CD8-positive, alpha-beta T cell (primary cell): ENCODE measurements at regions of chr5 and their contacts with region 1.

Region 1: GRCh38 chr5:16489322-16489791 is 23.8 kb upstream of the ZNF622 start:
- DNase-seq: peak in 3 of 9 experiments; percentile 11 to 38 (median 25)
- ATAC-seq: peak; percentile 84
- H3K4me3 ChIP-seq: no peak overlapping the region
- H3K4me3 Mint-ChIP-seq: no peak overlapping the region
- H3K27ac ChIP-seq: no peak overlapping the region
- H3K27ac Mint-ChIP-seq: no peak overlapping the region
- H3K4me1 ChIP-seq: no peaks in the 10 kb centered on the region
- H3K4me1 Mint-ChIP-seq: peaks cover 52% of the 10 kb centered on the region
- H3K27me3 ChIP-seq: no peaks in the 10 kb centered on the region
- H3K27me3 Mint-ChIP-seq: no peaks in the 10 kb centered on the region
- CTCF ChIP-seq: peak; percentile 67

Region 2: DNA sequence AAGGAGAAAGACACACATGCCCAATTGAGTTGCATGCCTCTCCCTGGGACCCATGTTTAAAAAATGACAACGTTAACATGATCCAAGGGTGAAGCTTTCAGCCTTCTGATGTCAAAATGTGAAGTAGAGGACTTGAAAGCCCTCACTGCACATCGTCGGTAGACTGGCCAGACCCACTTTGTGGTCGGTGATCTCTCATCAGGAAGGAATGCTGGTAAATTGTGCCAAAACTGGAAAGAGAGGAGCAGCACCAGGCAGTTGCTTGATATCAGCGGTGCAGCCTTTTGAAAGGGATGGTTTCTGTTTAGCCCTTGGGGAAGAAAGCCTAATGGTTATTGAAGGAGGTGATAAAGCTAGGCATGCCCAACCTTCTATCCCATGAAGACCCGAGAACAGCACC is 184.5 kb before region 1 on chr5:
- CTCF ChIA-PET with region 1: no interaction called
- POLR2A ChIA-PET with region 1: no interaction called
- intact Hi-C with region 1: no loop called
- DNase-seq: no peak
- ATAC-seq: no peak
- H3K4me3 ChIP-seq: no peak overlapping the region
- H3K4me3 Mint-ChIP-seq: no peak overlapping the region
- H3K27ac ChIP-seq: no peak overlapping the region
- H3K27ac Mint-ChIP-seq: no peak overlapping the region
- H3K4me1 ChIP-seq: no peaks in the 10 kb centered on the region
- H3K4me1 Mint-ChIP-seq: no peaks in the 10 kb centered on the region
- H3K27me3 ChIP-seq: no peaks in the 10 kb centered on the region
- H3K27me3 Mint-ChIP-seq: peaks cover 3% of the 10 kb centered on the region
- CTCF ChIP-seq: no peak

Region 3: DNA sequence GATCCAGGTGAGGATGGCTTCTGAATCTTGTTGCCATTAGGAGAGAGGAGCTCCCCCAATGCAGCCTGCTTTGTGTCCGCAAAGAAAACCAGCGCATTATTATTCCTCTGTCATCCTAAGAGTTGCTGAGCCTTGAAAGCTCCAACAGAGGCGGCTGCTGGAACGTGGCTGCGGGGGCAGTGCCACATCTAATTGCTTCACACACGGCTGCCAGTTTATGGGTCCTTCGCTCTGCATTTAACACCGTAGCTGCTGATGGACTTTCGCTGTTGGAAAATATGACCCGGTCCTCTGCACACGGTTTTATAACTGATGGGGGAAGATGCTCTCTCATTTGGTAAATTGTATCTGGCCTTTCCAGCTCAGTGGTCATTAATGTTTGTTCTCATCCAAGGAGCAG is 61.8 kb before region 1 on chr5:
- CTCF ChIA-PET with region 1: no interaction called
- POLR2A ChIA-PET with region 1: no interaction called
- intact Hi-C with region 1: no loop called
- DNase-seq: no peak
- ATAC-seq: no peak
- H3K4me3 ChIP-seq: no peak overlapping the region
- H3K4me3 Mint-ChIP-seq: no peak overlapping the region
- H3K27ac ChIP-seq: no peak overlapping the region
- H3K27ac Mint-ChIP-seq: no peak overlapping the region
- H3K4me1 ChIP-seq: no peaks in the 10 kb centered on the region
- H3K4me1 Mint-ChIP-seq: no peaks in the 10 kb centered on the region
- H3K27me3 ChIP-seq: no peaks in the 10 kb centered on the region
- H3K27me3 Mint-ChIP-seq: peaks cover 17% of the 10 kb centered on the region
- CTCF ChIP-seq: no peak

Region 4: DNA sequence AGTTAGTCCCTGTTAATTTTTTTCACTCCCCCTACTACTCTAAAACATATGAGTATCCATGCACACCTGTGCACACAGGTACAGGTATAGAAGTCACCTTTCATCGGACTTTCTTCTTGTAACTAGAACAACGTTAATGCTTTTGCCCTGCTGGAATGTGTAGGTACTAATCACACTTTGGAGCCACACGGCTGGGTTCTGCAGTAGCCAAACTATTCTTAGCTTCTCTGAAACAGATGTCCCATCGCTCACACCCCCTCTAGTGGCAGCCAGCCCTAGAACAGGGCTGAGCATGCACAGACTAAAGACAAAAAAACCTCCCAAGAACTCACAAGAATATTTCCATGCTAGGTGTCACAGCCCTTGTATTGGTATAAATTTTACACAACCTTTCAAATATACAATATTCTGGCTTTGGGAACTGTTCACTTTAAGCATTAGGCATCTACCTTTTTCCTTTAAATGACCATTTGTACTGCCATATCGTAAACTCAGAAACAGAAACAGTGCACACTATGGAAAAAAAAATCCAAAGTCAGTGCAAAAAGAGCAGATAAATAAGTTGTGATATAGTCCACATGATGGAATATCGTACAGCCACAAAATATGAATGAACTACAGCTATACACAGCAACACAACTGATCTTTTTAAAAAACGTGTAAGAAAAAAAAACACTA is 63.4 kb after region 1 on chr5:
- CTCF ChIA-PET with region 1: interaction called, 4 read pairs
- POLR2A ChIA-PET with region 1: no interaction called
- intact Hi-C with region 1: loop called (anchors 5 kb)
- DNase-seq: peak in 8 of 9 experiments; percentile 11 to 63 (median 49)
- ATAC-seq: peak; percentile 86
- H3K4me3 ChIP-seq: no peak overlapping the region
- H3K4me3 Mint-ChIP-seq: no peak overlapping the region
- H3K27ac ChIP-seq: no peak overlapping the region
- H3K27ac Mint-ChIP-seq: no peak overlapping the region
- H3K4me1 ChIP-seq: no peaks in the 10 kb centered on the region
- H3K4me1 Mint-ChIP-seq: peaks cover 54% of the 10 kb centered on the region
- H3K27me3 ChIP-seq: no peaks in the 10 kb centered on the region
- H3K27me3 Mint-ChIP-seq: no peaks in the 10 kb centered on the region
- CTCF ChIP-seq: peak; percentile 73

Region 5: DNA sequence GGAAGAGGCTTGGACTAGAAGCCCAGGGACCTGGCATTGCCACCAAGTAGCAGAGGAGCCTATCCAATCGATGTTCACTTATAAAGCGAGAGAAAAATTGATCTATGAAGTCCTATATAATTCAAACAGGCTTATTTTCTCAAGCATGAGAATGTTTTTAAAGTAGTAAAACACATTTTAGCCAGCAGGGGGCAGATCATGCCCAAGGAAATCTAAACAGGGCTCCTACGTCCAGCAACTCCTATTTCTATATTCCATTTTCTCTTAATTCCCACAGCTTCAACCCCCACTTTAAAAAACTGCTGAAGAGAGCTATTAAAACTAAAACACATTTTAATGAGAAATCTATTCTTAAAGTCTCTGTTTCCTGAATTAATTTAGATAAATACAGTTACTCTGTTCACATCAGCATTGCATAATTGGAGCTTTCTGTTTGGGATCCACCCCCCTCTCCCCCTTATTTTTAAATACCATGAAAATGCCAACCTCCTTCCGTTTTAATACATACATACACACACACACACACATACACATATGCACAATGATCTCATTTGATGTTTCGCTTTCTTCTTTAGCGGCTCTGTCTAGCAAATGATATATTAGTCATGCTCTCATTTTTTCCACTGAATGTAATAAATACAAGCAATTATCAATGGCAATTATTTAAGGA is 301.8 kb after region 1 on chr5:
- CTCF ChIA-PET with region 1: interaction called, 3 read pairs
- POLR2A ChIA-PET with region 1: no interaction called
- intact Hi-C with region 1: loop called in 1 of 2 experiments (anchors 2 kb)
- DNase-seq: peak in 4 of 9 experiments; percentile 11 to 45 (median 26)
- ATAC-seq: peak; percentile 17
- H3K4me3 ChIP-seq: no peak overlapping the region
- H3K4me3 Mint-ChIP-seq: peak overlapping the region; percentile 32
- H3K27ac ChIP-seq: no peak overlapping the region
- H3K27ac Mint-ChIP-seq: no peak overlapping the region
- H3K4me1 ChIP-seq: no peaks in the 10 kb centered on the region
- H3K4me1 Mint-ChIP-seq: peaks cover 2% of the 10 kb centered on the region
- H3K27me3 ChIP-seq: no peaks in the 10 kb centered on the region
- H3K27me3 Mint-ChIP-seq: no peaks in the 10 kb centered on the region
- CTCF ChIP-seq: peak; percentile 74

Region 6: GRCh38 chr5:17132444-17133083 is 643.2 kb after region 1 on chr5:
- CTCF ChIA-PET with region 1: no interaction called
- POLR2A ChIA-PET with region 1: no interaction called
- intact Hi-C with region 1: loop called in 1 of 2 experiments (anchors 2 kb)
- DNase-seq: no peak
- ATAC-seq: no peak
- H3K4me3 ChIP-seq: no peak overlapping the region
- H3K4me3 Mint-ChIP-seq: no peak overlapping the region
- H3K27ac ChIP-seq: no peak overlapping the region
- H3K27ac Mint-ChIP-seq: no peak overlapping the region
- H3K4me1 ChIP-seq: no peaks in the 10 kb centered on the region
- H3K4me1 Mint-ChIP-seq: peaks cover 6% of the 10 kb centered on the region
- H3K27me3 ChIP-seq: no peaks in the 10 kb centered on the region
- H3K27me3 Mint-ChIP-seq: peaks cover 5% of the 10 kb centered on the region
- CTCF ChIP-seq: peak; percentile 43

Region 7: DNA sequence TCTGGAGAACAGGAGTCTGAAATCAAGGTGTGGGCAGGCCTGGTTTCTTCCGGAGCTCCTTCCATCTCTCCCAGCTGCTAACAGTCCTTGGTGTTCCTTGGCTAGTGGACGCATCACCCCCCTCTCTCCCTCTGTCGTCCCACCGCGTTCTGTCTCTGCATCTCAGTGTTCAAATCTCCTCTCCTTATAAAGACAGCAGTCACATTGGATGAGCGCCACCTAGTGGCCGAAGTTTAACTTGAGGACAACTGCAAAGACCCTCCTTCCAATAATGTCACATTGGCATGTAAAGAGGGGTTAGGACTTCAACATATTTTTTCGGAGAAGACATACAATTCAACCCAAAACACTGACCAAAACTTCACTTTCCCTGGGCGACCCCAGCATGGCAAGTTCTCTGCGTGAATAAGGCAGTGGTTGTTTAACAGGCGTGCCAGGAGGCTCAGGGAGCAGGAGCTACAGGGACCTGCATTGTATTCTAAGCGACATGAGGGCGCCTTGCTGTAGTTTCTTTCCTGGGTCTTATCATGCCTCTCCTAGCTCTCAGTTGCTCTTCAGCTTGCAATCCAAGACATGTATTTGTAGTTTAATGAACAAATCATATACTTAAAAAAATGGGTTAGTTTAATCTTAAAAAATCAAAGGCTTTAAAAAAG is 700.2 kb after region 1 on chr5:
- CTCF ChIA-PET with region 1: no interaction called
- POLR2A ChIA-PET with region 1: no interaction called
- intact Hi-C with region 1: loop called (anchors 5 kb)
- DNase-seq: peak; percentile 7 to 58 (median 40)
- ATAC-seq: no peak
- H3K4me3 ChIP-seq: no peak overlapping the region
- H3K4me3 Mint-ChIP-seq: no peak overlapping the region
- H3K27ac ChIP-seq: no peak overlapping the region
- H3K27ac Mint-ChIP-seq: no peak overlapping the region
- H3K4me1 ChIP-seq: no peaks in the 10 kb centered on the region
- H3K4me1 Mint-ChIP-seq: no peaks in the 10 kb centered on the region
- H3K27me3 ChIP-seq: no peaks in the 10 kb centered on the region
- H3K27me3 Mint-ChIP-seq: peaks cover 12% of the 10 kb centered on the region
- CTCF ChIP-seq: peak; percentile 71

Region 8: GRCh38 chr5:17204133-17204489 is 714.8 kb after region 1 on chr5:
- CTCF ChIA-PET with region 1: no interaction called
- POLR2A ChIA-PET with region 1: no interaction called
- intact Hi-C with region 1: loop called in 1 of 2 experiments (anchors 5 kb)
- DNase-seq: no peak
- ATAC-seq: no peak
- H3K4me3 ChIP-seq: no peak overlapping the region
- H3K4me3 Mint-ChIP-seq: no peak overlapping the region
- H3K27ac ChIP-seq: no peak overlapping the region
- H3K27ac Mint-ChIP-seq: no peak overlapping the region
- H3K4me1 ChIP-seq: no peaks in the 10 kb centered on the region
- H3K4me1 Mint-ChIP-seq: no peaks in the 10 kb centered on the region
- H3K27me3 ChIP-seq: no peaks in the 10 kb centered on the region
- H3K27me3 Mint-ChIP-seq: peaks cover 9% of the 10 kb centered on the region
- CTCF ChIP-seq: no peak